AG04450 (cell line): ENCODE measurements at regions of chr9 and their contacts with region 1.

Region 1: DNA sequence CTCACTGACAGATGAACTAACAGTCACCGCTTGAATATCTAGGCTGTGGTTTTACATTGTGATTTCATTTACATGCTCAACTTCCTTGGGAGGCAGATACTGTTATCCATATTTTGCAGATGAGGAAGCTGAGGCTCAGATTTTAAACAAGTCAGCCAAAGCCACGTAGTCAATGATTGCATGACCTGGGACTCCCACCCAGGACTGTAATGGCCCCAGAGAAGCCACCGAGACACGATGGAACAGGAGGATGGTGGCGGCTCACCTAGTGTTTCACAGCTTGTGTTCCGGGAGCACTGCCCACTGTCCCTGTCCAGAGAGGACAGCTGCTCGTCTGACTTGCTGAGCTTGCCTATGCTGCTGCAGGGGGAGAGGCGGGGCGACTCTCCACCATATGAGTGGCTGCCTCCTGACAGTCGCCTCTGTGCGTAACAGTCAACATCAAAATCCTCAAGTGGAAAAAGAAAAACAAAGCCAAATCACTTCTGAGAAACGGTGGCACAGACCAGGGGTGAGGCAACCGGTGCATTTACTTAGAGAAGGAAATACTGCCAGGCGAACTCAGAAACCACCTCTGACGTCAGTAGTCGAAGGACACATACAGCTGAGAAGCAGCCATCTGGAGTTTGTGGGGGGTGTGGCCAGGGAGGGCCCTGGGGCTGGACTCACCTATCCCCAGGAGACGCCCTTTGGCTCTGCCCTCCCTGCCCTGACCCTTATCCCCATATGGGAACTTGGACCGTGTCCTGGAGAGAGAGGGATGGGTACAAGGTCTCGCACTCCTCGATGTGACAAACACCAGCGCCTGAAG is 82.5 kb downstream of the PRRT1B start:
- DNase-seq: peak; percentile 46
- H3K4me3 ChIP-seq: no peak overlapping the region
- H3K27ac ChIP-seq: peak overlapping the region; percentile 97
- H3K27me3 ChIP-seq: no peaks in the 10 kb centered on the region
- CTCF ChIP-seq: no peak

Region 2: DNA sequence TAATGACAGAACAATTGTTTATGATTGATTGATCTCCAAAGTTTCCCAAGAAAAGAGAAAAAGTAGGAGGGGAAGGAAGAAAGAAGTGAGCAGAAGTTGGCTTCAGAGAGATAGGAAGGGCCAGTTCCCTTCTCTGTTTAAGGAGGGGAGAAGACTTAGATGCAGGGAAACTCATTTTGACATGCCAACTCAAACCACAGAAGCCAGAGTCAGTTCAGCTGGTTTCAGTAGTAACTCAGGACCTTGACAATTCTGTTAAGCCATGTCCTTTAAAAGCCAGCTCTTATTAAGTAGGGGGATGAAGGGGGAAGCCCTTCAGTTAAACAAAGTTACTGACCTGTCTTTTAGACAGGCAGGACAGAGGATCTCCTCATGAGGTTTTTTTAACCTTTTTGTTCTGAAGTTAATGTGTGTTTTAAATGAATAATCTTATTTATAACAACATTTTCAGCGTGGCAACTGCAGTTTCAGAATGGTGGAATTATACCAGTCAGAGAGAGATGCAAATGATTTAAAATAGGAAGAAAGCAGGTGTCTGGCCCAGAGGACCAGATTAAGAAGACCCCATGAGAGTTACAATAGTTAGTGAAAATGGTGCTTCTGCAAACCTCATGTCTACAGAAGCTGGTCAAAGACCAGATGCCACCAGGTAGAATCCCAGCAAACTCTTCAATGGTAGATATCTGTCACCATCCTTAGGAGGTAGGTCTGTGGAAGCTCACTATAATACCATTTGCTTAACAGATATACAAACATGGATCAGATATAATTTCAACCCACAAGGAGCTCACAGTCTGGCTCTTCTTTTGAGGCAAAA is 822.1 kb before region 1 on chr9:
- CTCF ChIA-PET with region 1: no interaction called
- POLR2A ChIA-PET with region 1: no interaction called
- DNase-seq: no peak
- H3K4me3 ChIP-seq: no peak overlapping the region
- H3K27ac ChIP-seq: no peak overlapping the region
- H3K27me3 ChIP-seq: no peaks in the 10 kb centered on the region
- CTCF ChIP-seq: no peak

Region 3: DNA sequence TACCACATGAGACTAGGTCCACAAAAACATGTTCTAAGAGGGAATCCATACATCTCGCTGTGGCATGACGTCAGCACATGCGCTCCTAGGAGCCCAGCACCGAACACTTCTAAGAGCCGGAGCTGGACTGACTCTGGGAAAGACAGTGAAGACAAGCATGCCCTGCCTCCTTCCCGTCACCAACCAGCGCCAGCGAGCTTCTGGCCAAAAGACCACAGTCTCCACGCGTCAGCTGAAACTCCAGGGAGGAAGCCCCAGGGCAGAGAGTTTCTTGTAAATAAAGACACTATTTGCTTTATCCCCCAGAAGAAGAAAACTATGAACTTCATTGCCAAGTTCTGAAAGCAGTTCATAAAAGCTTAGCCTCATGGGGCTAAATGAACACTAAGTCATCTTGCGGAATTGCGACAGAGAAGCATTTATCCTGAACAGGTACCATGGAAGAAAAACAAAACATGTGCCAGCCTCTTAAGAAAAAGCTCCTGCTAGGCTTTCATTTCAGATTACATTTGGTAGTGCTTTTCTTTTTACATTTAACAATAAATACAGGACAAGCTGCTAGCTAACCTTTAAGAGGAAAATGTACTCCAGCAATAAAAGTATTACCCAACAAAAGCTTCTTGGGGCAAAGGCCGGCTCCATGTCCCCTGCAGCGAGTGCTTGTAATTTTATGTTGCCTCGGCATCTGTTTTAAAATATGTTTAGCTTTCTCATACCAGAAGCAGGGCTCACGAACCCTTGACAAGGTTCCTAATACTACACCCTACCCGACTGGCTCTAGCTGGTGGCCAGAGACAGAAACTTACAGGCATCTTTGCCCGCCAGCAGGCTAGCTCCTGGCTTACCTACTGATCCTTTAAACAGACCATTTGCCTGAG is 14.0 kb after region 1 on chr9:
- CTCF ChIA-PET with region 1: no interaction called
- POLR2A ChIA-PET with region 1: no interaction called
- DNase-seq: no peak
- H3K4me3 ChIP-seq: no peak overlapping the region
- H3K27ac ChIP-seq: peak overlapping the region; percentile 25
- H3K27me3 ChIP-seq: no peaks in the 10 kb centered on the region
- CTCF ChIP-seq: no peak

Region 4: GRCh38 chr9:131733541-131734061 is 105.7 kb after region 1 on chr9:
- CTCF ChIA-PET with region 1: no interaction called
- POLR2A ChIA-PET with region 1: interaction called, 10 read pairs
- DNase-seq: peak; percentile 84
- H3K4me3 ChIP-seq: no peak overlapping the region
- H3K27ac ChIP-seq: peak overlapping the region; percentile 81
- H3K27me3 ChIP-seq: no peaks in the 10 kb centered on the region
- CTCF ChIP-seq: no peak